Activated CD4-positive, alpha-beta T cell treated with anti-CD3 and anti-CD28 coated beads for 36 hours (primary cell): ENCODE measurements at regions of chr6 and their contacts with region 1.

Region 1: DNA sequence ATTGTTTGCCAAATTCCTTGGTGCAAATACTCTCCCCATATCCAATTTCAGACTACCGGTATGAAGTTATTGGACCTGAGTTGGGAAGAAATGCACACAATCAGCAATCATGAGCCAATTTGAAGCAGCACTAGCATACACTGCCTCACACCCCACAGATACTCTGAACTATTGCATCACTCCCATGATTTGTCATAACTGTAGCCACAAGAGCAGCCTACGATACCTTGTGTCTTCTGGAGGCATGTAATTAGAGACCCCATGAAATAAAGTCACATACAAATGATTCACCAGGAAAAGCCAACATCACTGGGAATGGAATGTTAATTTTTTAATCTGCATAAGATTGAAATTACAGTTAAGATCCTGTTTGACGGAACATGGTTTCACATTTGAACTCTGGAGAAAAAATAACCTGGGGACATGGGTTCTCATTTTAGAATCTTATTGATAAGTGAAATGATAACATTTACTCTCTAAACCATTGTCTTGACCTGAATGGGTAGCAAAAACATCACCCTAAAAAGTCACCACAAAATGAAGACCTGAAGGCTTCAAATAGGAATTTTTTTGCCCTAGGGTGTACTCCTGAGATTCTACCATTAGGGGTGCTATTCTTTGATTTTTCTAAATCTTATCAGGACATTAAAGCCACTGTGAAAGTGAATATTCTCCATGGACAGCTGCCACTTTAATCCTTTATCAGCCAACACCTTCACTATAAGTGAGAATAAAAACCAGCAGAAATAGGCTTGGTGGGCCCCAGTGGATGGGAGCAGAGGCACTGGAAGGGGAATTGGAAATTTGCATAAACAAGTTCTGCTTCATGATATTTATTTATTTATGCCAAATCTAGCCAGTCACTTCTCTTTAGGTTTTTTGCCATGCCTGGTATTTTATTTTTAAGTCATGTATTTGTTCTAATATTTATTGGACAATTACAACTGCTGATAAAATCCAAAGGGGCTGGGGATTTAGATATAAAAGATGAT is 34.5 kb upstream of the HBS1L start:
- DNase-seq: peak; percentile 54
- ATAC-seq: peak; percentile 77
- H3K4me3 Mint-ChIP-seq: peak overlapping the region; percentile 48
- H3K27ac Mint-ChIP-seq: peak overlapping the region; percentile 93
- H3K4me1 Mint-ChIP-seq: peaks cover 86% of the 10 kb centered on the region
- H3K27me3 Mint-ChIP-seq: no peaks in the 10 kb centered on the region

Region 2: DNA sequence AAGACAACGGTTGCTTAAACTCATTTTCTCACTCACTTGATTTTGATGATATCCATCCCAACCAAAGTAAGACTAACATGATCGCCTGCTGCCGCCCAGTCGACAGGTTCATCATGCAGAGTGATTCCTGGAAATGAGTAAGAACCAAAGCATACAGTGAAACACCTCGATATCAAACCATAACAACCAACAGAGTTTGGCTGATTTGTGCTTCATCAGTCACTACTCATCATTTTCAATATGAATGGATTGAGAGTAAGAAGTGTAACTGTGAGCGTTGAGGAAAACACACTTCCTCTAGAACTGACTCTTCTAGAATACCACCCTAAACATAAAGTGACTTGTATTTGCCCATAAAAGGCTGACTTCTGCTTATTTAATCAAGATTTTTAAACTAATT is 110.0 kb before region 1 on chr6:
- CTCF ChIA-PET with region 1: interaction called, 3 read pairs
- POLR2A ChIA-PET with region 1: no interaction called
- intact Hi-C with region 1: loop called (anchors 1 to 2 kb)
- DNase-seq: peak; percentile 75
- ATAC-seq: peak; percentile 92
- H3K4me3 Mint-ChIP-seq: no peak overlapping the region
- H3K27ac Mint-ChIP-seq: peak overlapping the region; percentile 39
- H3K4me1 Mint-ChIP-seq: peaks cover 48% of the 10 kb centered on the region
- H3K27me3 Mint-ChIP-seq: no peaks in the 10 kb centered on the region

Region 3: GRCh38 chr6:135030056-135030473 is 59.0 kb before region 1 on chr6:
- CTCF ChIA-PET with region 1: interaction called, 6 read pairs
- POLR2A ChIA-PET with region 1: interaction called, 8 read pairs
- intact Hi-C with region 1: loop called (anchors 1 kb)
- DNase-seq: no peak
- ATAC-seq: peak; percentile 97
- H3K4me3 Mint-ChIP-seq: peak overlapping the region; percentile 54
- H3K27ac Mint-ChIP-seq: peak overlapping the region; percentile 75
- H3K4me1 Mint-ChIP-seq: peaks cover 69% of the 10 kb centered on the region
- H3K27me3 Mint-ChIP-seq: no peaks in the 10 kb centered on the region

Region 4: GRCh38 chr6:135105710-135106109 is 16.6 kb after region 1 on chr6:
- CTCF ChIA-PET with region 1: interaction called, 14 read pairs
- POLR2A ChIA-PET with region 1: no interaction called
- intact Hi-C with region 1: no loop called
- DNase-seq: no peak
- ATAC-seq: no peak
- H3K4me3 Mint-ChIP-seq: no peak overlapping the region
- H3K27ac Mint-ChIP-seq: no peak overlapping the region
- H3K4me1 Mint-ChIP-seq: peaks cover 50% of the 10 kb centered on the region
- H3K27me3 Mint-ChIP-seq: no peaks in the 10 kb centered on the region

Region 5: DNA sequence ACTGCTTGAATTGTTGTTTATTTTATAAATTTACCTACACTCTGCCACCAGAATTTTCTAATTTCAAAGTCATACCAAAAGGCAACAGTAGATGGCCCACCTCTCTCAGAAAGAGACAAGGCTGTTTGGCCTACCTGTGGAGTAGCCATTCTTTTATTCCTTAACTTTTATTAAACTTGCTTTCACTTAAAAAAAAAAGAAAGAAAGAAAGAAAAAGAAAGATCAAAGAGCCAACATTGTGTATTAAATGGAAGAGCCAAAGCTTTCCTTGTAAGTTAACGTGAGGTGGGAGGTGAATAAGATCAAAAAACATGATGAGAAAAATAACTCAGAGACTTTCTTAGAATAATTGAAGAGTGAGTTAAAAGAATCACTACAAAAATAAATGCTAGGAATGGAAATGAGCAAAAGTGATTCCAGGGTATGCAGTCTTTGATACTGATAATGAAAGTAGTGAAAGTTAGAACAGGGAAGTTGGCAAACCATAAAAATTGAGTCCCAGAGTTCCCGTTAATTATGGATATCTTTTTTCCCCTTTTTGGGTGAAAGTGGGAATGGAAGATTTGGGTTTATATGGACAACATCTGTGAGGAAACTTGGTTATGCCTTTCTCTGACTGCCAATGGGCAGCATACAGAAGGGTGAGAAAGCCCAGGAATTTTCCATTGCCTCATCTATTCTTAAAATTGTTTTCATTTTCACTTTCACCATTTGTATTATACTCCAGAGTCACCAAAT is 56.1 kb after region 1 on chr6:
- CTCF ChIA-PET with region 1: interaction called, 8 read pairs
- POLR2A ChIA-PET with region 1: interaction called, 3 read pairs
- intact Hi-C with region 1: loop called (anchors 1 to 2 kb)
- DNase-seq: no peak
- ATAC-seq: peak; percentile 52
- H3K4me3 Mint-ChIP-seq: peak overlapping the region; percentile 2
- H3K27ac Mint-ChIP-seq: peak overlapping the region; percentile 88
- H3K4me1 Mint-ChIP-seq: peaks cover 65% of the 10 kb centered on the region
- H3K27me3 Mint-ChIP-seq: no peaks in the 10 kb centered on the region

Region 6: GRCh38 chr6:135647521-135647920 is 558.4 kb after region 1 on chr6:
- CTCF ChIA-PET with region 1: no interaction called
- POLR2A ChIA-PET with region 1: no interaction called
- intact Hi-C with region 1: loop called in 1 of 2 experiments (anchors 5 kb)
- DNase-seq: peak; percentile 55
- ATAC-seq: peak; percentile 92
- H3K4me3 Mint-ChIP-seq: no peak overlapping the region
- H3K27ac Mint-ChIP-seq: peak overlapping the region; percentile 63
- H3K4me1 Mint-ChIP-seq: peaks cover 45% of the 10 kb centered on the region
- H3K27me3 Mint-ChIP-seq: no peaks in the 10 kb centered on the region